PC-3 (cell line): ENCODE measurements at regions of chr1 and their contacts with region 1.

Region 1: GRCh38 chr1:216961516-216961915 is 238.3 kb upstream of the ESRRG start:
- DNase-seq: peak; percentile 47
- ATAC-seq: peak; percentile 67
- H3K4me3 ChIP-seq: no peak overlapping the region
- H3K27ac ChIP-seq: no peak overlapping the region
- H3K4me1 ChIP-seq: no peaks in the 10 kb centered on the region
- H3K27me3 ChIP-seq: no peaks in the 10 kb centered on the region
- CTCF ChIP-seq: peak; percentile 76

Region 2: GRCh38 chr1:216390956-216391355 is 570.6 kb before region 1 on chr1:
- CTCF ChIA-PET with region 1: no interaction called
- POLR2A ChIA-PET with region 1: no interaction called
- intact Hi-C with region 1: no loop called
- DNase-seq: peak; percentile 53
- ATAC-seq: peak; percentile 76
- H3K4me3 ChIP-seq: no peak overlapping the region
- H3K27ac ChIP-seq: no peak overlapping the region
- H3K4me1 ChIP-seq: peaks cover 4% of the 10 kb centered on the region; the same call in 1 of the 2 replicates
- H3K27me3 ChIP-seq: peaks cover 16% of the 10 kb centered on the region; the same call in 1 of the 2 replicates
- CTCF ChIP-seq: no peak

Region 3: GRCh38 chr1:216750012-216750627 is 211.4 kb before region 1 on chr1:
- CTCF ChIA-PET with region 1: interaction called, 3 read pairs
- POLR2A ChIA-PET with region 1: no interaction called
- intact Hi-C with region 1: loop called (anchors 2 kb)
- DNase-seq: peak; percentile 85
- ATAC-seq: peak; percentile 98
- H3K4me3 ChIP-seq: no peak overlapping the region
- H3K27ac ChIP-seq: no peak overlapping the region
- H3K4me1 ChIP-seq: no peaks in the 10 kb centered on the region
- H3K27me3 ChIP-seq: peaks cover 22% of the 10 kb centered on the region; the same call in 1 of the 2 replicates
- CTCF ChIP-seq: peak; percentile 95

Region 4: GRCh38 chr1:217211486-217211885 is 250.0 kb after region 1 on chr1:
- CTCF ChIA-PET with region 1: no interaction called
- POLR2A ChIA-PET with region 1: no interaction called
- intact Hi-C with region 1: loop called (anchors 5 kb)
- DNase-seq: no peak
- ATAC-seq: no peak
- H3K4me3 ChIP-seq: no peak overlapping the region
- H3K27ac ChIP-seq: no peak overlapping the region
- H3K4me1 ChIP-seq: no peaks in the 10 kb centered on the region
- H3K27me3 ChIP-seq: no peaks in the 10 kb centered on the region
- CTCF ChIP-seq: no peak

Region 5: DNA sequence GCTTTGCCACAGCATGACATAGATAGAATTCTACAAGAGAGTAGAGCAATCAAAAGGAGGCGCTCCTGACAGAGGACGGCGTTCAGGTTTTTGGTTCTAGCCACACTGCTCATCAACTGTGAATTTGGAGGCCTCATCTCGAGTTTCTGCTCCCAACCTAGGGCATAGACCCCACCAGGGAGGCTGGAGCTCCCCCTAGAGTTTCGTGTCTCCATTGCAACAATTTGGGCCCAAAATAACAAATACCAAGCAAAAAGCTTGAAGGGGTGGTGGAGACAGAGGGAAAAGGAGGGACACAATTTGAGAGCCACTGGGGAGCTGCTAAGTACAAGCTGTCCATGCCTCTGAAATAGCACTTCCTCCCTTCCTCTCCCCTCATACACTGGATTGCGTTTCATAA is 372.4 kb after region 1 on chr1:
- CTCF ChIA-PET with region 1: interaction called, 6 read pairs
- POLR2A ChIA-PET with region 1: no interaction called
- intact Hi-C with region 1: loop called (anchors 1 kb)
- DNase-seq: peak; percentile 89
- ATAC-seq: peak; percentile 77
- H3K4me3 ChIP-seq: no peak overlapping the region
- H3K27ac ChIP-seq: no peak overlapping the region
- H3K4me1 ChIP-seq: no peaks in the 10 kb centered on the region
- H3K27me3 ChIP-seq: peaks cover 5% of the 10 kb centered on the region; the same call in 1 of the 2 replicates
- CTCF ChIP-seq: peak; percentile 98

Region 6: DNA sequence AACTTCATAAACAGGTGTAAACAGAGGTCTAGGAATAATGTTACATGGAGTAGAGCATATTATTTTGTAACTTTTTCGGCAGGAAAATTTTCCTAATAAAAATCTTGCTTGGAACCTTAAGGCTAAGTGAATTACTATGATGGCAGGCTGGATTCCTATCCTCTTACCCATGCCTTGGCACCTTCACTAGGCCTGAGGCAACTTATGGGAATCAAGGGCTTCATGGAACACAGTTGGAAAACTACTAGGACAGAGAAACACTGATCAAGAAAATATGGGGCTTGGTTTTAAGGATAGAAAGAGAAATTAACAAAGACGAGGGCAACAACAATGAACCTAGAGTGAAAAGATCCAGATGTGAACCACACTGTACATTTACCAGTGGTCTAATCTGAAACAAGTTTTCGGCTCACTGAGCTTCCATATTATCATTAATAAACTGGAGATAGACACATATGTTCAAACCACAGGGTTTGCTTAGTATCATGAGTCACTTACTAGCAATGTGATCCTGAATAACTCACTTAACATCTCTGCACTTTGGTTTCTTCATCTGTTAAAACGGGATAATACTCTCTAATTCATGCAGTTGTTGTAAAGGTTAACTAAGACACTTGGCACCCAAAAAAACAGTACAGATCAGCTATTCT is 600.8 kb after region 1 on chr1:
- CTCF ChIA-PET with region 1: interaction called, 4 read pairs
- POLR2A ChIA-PET with region 1: no interaction called
- intact Hi-C with region 1: loop called (anchors 5 kb)
- DNase-seq: peak; percentile 97
- ATAC-seq: peak; percentile 97
- H3K4me3 ChIP-seq: peak overlapping the region; percentile 52
- H3K27ac ChIP-seq: peak overlapping the region; percentile 71
- H3K4me1 ChIP-seq: peaks cover 28% of the 10 kb centered on the region
- H3K27me3 ChIP-seq: no peaks in the 10 kb centered on the region
- CTCF ChIP-seq: no peak

Region 7: DNA sequence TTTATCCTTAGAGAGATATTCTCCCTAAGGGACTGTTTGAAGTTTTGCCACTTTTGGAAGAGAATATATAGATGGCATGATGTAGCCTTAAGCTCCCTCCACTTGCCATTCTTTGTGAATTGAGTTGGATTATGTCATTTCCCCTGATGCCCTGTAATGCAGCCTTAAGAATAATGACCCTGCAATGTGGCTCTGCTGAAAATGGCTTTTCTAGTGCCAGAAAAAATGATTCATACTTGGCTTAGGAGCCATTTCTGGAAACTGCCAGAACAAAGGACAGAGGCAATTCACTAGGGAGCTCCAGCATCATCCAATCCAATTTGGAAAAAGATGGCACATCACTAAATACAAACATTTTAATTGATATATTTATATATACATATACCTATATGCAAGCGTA is 935.0 kb after region 1 on chr1:
- CTCF ChIA-PET with region 1: no interaction called
- POLR2A ChIA-PET with region 1: no interaction called
- intact Hi-C with region 1: loop called (anchors 10 kb)
- DNase-seq: peak; percentile 91
- ATAC-seq: peak; percentile 81
- H3K4me3 ChIP-seq: no peak overlapping the region
- H3K27ac ChIP-seq: no peak overlapping the region
- H3K4me1 ChIP-seq: peaks cover 30% of the 10 kb centered on the region
- H3K27me3 ChIP-seq: no peaks in the 10 kb centered on the region
- CTCF ChIP-seq: no peak